BJ (cell line): ENCODE measurements at regions of chr5 and their contacts with region 1.

Region 1: GRCh38 chr5:68562308-68562707 is 346.8 kb downstream of the PIK3R1 start:
- DNase-seq: no peak
- H3K4me3 ChIP-seq: no peak overlapping the region
- H3K27me3 ChIP-seq: no peaks in the 10 kb centered on the region
- CTCF ChIP-seq: no peak

Region 2: GRCh38 chr5:68576805-68577204 is 14.5 kb after region 1 on chr5:
- CTCF ChIA-PET with region 1: no interaction called
- POLR2A ChIA-PET with region 1: interaction called, 17 read pairs
- DNase-seq: no peak
- H3K4me3 ChIP-seq: no peak overlapping the region
- H3K27me3 ChIP-seq: no peaks in the 10 kb centered on the region
- CTCF ChIP-seq: no peak